Motor neuron (in vitro differentiated cells): ENCODE measurements at regions of chr9 and their contacts with region 1.

Region 1: DNA sequence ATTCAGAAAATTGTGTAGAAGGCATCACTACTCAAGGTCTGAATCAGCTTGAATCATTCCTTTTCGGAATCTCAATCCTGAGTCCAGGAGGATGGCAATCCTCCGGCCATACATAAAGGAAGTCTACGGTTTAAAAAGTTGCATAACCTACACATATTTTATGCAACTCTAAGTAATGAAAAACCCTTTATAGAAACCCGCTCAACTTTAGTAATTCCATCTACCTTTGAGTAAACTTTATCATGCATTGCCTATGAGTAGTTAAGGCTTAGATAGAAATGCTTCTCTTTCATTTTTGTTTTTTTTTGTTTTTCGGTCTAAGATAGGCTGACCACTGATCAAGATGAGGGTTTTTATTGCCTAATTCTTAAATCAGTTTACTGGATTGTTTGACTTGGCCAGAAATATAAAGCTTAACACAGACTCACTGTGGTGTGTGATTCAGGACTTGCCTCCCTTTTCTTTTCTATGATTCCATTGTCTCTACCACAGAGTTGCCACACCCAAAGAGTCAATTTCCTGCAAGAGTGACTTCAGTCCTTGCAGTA is 85.0 kb downstream of the LURAP1L start:
- ATAC-seq: peak in 4 of 8 experiments; percentile 29 to 92 (median 68)
- H3K4me3 ChIP-seq: no peak overlapping the region
- H3K27ac ChIP-seq: no peak overlapping the region
- H3K4me1 ChIP-seq: no peaks in the 10 kb centered on the region

Region 2: DNA sequence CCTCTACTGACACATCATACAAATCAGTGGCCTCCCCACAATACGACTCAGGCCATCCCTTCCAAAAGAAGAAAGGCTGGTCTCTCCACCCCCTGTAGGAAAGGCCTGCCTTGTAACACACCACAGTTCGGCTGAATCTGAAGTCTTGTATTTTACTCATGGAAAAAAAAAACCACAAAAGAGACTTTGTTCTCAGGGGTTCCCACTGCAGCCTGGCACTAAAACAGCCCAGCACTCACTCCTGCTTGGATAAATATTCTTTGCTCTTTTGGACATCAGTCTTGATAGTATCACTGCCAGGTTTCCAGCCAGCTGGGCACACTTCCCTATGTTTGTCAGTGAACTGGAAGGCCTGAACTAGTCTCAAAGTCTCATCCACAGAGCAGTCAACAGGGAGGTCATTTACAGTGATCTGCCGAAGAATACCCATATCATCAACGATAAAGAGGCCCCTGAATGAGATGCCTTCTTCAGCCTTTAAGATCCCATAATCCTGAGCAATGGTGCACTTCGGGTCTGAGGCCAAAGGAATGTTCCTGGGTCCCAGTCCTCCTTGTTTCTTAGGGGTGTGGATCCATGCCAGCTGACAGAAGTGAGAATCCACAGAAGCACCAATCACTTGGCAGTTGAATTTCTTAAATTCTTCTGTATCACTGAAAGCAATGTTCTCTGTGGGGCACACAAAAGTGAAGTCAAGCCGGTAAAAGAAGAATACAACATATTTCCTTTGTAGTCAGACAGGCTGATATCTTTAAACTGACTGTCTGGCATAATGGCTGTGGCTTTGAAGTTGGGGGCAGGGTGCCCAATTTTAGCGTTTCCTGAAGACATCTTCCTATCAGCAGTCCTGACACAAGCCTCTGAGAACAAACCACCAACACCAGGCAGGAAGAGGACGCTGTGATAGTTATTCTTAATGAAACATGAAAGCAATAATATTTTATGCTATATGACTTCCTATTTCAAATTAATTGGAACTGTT is 113.1 kb after region 1 on chr9:
- in situ Hi-C with region 1: loop called in 1 of 9 experiments (anchors 25 kb)
- ATAC-seq: peak in 4 of 8 experiments; percentile 10 to 54 (median 26)
- H3K4me3 ChIP-seq: no peak overlapping the region
- H3K27ac ChIP-seq: no peak overlapping the region
- H3K4me1 ChIP-seq: no peaks in the 10 kb centered on the region